Activated CD4-positive, alpha-beta T cell treated with anti-CD3 and anti-CD28 coated beads for 36 hours (primary cell): ENCODE measurements at regions of chr1 and their contacts with region 1.

Region 1: GRCh38 chr1:17439250-17440073 is at the start of gene RCC2:
- DNase-seq: peak; percentile 86
- ATAC-seq: peak; percentile 69
- H3K4me3 Mint-ChIP-seq: peak within 1 kb of the TSS; percentile 96
- H3K27ac Mint-ChIP-seq: peak within 1 kb of the TSS; percentile 96
- H3K4me1 Mint-ChIP-seq: peaks cover 45% of the 10 kb centered on the region
- H3K27me3 Mint-ChIP-seq: no peaks in the 10 kb centered on the region
- total RNA-seq, gene RCC2: 107 to 120 TPM

Region 2: GRCh38 chr1:16913833-16914662 is 525.4 kb before region 1 on chr1:
- CTCF ChIA-PET with region 1: no interaction called
- POLR2A ChIA-PET with region 1: no interaction called
- intact Hi-C with region 1: loop called in 1 of 2 experiments (anchors 2 kb)
- DNase-seq: peak; percentile 96
- ATAC-seq: peak; percentile 96
- H3K4me3 Mint-ChIP-seq: peak overlapping the region; percentile 89
- H3K27ac Mint-ChIP-seq: peak overlapping the region; percentile 83
- H3K4me1 Mint-ChIP-seq: peaks cover 31% of the 10 kb centered on the region
- H3K27me3 Mint-ChIP-seq: no peaks in the 10 kb centered on the region

Region 3: GRCh38 chr1:17053685-17054410 is 385.6 kb before region 1 on chr1 and contains the start of gene SDHB:
- CTCF ChIA-PET with region 1: no interaction called
- POLR2A ChIA-PET with region 1: no interaction called
- intact Hi-C with region 1: loop called in 1 of 2 experiments (anchors 1 kb)
- DNase-seq: peak; percentile 100
- ATAC-seq: peak; percentile 99
- H3K4me3 Mint-ChIP-seq: peak within 1 kb of the TSS; percentile 94
- H3K27ac Mint-ChIP-seq: peak within 1 kb of the TSS; percentile 97
- H3K4me1 Mint-ChIP-seq: peaks cover 21% of the 10 kb centered on the region
- H3K27me3 Mint-ChIP-seq: peaks cover 3% of the 10 kb centered on the region
- total RNA-seq, gene SDHB: 132 to 149 TPM

Region 4: DNA sequence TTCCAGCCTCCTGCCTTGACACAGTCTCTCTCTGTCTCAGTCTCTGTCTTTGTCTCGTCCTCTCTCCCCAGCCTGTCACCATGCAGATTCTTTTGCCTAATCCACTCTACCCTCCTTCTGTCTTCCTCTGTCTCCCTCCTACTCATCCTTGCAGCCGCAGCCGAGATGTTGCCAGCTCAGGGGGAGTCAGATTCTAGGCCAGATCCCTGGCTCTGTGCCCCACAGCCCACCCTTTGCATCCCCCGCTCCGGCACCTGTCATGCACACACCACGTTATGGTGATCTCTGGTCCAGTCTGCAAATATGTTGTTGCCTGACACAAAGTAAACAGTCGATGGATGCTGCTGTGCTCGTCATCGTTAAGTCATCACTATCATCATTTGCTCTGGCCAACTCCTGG is 632.6 kb after region 1 on chr1:
- CTCF ChIA-PET with region 1: no interaction called
- POLR2A ChIA-PET with region 1: no interaction called
- intact Hi-C with region 1: no loop called
- DNase-seq: no peak
- ATAC-seq: no peak
- H3K4me3 Mint-ChIP-seq: no peak overlapping the region
- H3K27ac Mint-ChIP-seq: no peak overlapping the region
- H3K4me1 Mint-ChIP-seq: peaks cover 24% of the 10 kb centered on the region
- H3K27me3 Mint-ChIP-seq: peaks cover 2% of the 10 kb centered on the region

Region 5: GRCh38 chr1:18926315-18927081 is 1487.0 kb after region 1 on chr1:
- CTCF ChIA-PET with region 1: no interaction called
- POLR2A ChIA-PET with region 1: no interaction called
- intact Hi-C with region 1: loop called in 1 of 2 experiments (anchors 10 kb)
- DNase-seq: peak; percentile 94
- ATAC-seq: peak; percentile 89
- H3K4me3 Mint-ChIP-seq: peak overlapping the region; percentile 69
- H3K27ac Mint-ChIP-seq: peak overlapping the region; percentile 99
- H3K4me1 Mint-ChIP-seq: peaks cover 92% of the 10 kb centered on the region
- H3K27me3 Mint-ChIP-seq: no peaks in the 10 kb centered on the region